ENCODE measurements at regions of chr1 and their contacts with region 1.

Region 1: DNA sequence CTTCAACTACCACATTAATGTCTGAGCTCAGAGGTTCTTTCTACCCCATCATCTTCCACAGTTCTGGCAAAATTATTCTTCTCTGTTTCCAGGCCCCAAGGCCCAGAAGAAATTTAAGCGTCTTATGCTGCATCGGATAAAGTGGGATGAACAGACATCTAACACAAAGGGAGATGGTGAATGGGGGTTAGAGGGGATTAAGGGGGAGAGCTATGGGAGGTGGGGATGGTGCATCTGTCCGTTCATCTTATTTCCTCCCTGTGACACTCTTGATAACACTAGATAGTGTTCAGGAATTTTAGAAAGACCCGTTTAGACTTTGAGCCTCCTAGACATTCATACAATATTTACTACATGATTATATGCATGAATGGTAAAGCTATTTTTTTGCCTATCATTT is 17.6 kb upstream of the RPRD2 start:
- DNase-seq: no peak
- H3K4me3 ChIP-seq: no peak overlapping the region
- H3K27ac ChIP-seq: no peak overlapping the region
- H3K4me1 ChIP-seq: no peaks in the 10 kb centered on the region
- H3K27me3 ChIP-seq: no peaks in the 10 kb centered on the region
- CTCF ChIP-seq: no peak
- POLR2A ChIP-seq: no peak

Region 2: DNA sequence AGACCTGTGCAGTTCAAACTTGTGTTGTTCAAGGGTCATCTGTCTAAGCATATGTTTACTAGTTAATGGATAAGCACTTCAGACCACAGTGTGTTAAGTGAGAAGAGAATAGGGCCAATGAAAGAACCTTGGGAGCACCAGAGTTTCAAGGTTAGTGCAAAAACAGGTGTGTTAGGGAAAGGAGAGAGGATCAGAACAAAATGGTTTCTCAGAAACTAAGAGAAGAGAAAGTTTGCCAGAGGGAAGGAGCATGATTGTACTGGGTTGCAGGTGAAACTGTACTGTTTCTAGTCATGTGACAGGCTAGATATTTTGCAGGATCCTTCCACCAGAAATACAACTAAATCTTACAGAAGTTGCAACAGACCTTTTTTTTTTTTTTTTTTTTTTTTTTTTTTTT is 40.9 kb after region 1 on chr1:
- intact Hi-C with region 1: no loop called
- DNase-seq: no peak
- H3K4me3 ChIP-seq: no peak overlapping the region
- H3K27ac ChIP-seq: no peak overlapping the region
- H3K4me1 ChIP-seq: peaks cover 0 to 87% (median 47%) of the 10 kb centered on the region in 6 donors
- H3K27me3 ChIP-seq: no peaks in the 10 kb centered on the region
- CTCF ChIP-seq: no peak
- POLR2A ChIP-seq: no peak

Region 3: GRCh38 chr1:150829743-150830142 is 483.4 kb after region 1 on chr1:
- intact Hi-C with region 1: loop called (anchors 10 kb)
- DNase-seq: no peak
- H3K4me3 ChIP-seq: no peak overlapping the region
- H3K27ac ChIP-seq: no peak overlapping the region
- H3K4me1 ChIP-seq: no peaks in the 10 kb centered on the region
- H3K27me3 ChIP-seq: no peaks in the 10 kb centered on the region
- CTCF ChIP-seq: peak in 3 of 11 experiments; percentile 8 to 15 (median 12)
- POLR2A ChIP-seq: no peak

Measured in spleen (tissue), 13 donors.